Dendritic cell treated with granulocyte-macrophage colony-stimulating factor and Interleukin-4, amounts not matched to agents 40 ng/mL and 50 ng/mL, for 4 days (primary cell): ENCODE measurements at regions of chr10 and their contacts with region 1.

Region 1: DNA sequence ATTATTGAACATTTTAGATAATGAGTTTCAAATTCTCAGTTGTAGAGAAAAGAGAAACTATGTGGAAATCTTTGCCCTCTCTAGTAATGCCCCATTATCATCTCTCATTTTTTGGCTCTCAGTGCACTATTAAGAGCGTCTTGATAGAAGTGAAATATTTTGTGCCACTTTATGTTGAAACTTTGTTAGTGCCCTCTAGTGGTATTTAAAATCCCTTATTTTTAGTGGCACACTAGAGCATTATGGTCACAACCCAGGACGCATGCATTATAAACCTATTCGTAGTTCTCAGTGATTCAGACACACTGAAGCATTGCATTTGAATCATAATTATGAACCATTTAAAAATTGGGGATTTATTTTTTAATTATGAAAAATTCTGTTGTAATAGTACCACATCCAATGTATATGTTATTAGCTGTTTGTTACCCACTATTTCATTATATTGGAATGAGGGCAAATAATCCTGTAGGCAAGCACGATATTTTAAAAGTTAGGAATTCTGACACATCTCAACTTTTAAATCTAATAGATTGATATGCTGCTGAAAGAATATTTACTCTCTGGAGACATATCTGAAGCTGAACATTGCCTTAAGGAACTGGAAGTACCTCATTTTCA is 21.9 kb downstream of the PDCD4 start:
- H3K4me3 Mint-ChIP-seq: no peak overlapping the region
- H3K27ac Mint-ChIP-seq: no peak overlapping the region
- H3K4me1 Mint-ChIP-seq: peaks cover 5% of the 10 kb centered on the region
- H3K27me3 Mint-ChIP-seq: no peaks in the 10 kb centered on the region

Region 2: GRCh38 chr10:110600487-110601101 is 293.1 kb before region 1 on chr10:
- intact Hi-C with region 1: loop called (anchors 10 kb)
- H3K4me3 Mint-ChIP-seq: no peak overlapping the region
- H3K27ac Mint-ChIP-seq: no peak overlapping the region
- H3K4me1 Mint-ChIP-seq: no peaks in the 10 kb centered on the region
- H3K27me3 Mint-ChIP-seq: no peaks in the 10 kb centered on the region

Region 3: GRCh38 chr10:110746254-110746826 is 147.3 kb before region 1 on chr10:
- intact Hi-C with region 1: loop called (anchors 1 kb)
- H3K4me3 Mint-ChIP-seq: no peak overlapping the region
- H3K27ac Mint-ChIP-seq: no peak overlapping the region
- H3K4me1 Mint-ChIP-seq: peaks cover 9% of the 10 kb centered on the region
- H3K27me3 Mint-ChIP-seq: no peaks in the 10 kb centered on the region

Region 4: GRCh38 chr10:110803830-110804338 is 89.8 kb before region 1 on chr10:
- intact Hi-C with region 1: loop called (anchors 2 kb)
- H3K4me3 Mint-ChIP-seq: no peak overlapping the region
- H3K27ac Mint-ChIP-seq: no peak overlapping the region
- H3K4me1 Mint-ChIP-seq: peaks cover 10% of the 10 kb centered on the region
- H3K27me3 Mint-ChIP-seq: no peaks in the 10 kb centered on the region

Region 5: GRCh38 chr10:111207500-111207899 is 313.8 kb after region 1 on chr10:
- intact Hi-C with region 1: loop called (anchors 5 kb)
- H3K4me3 Mint-ChIP-seq: no peak overlapping the region
- H3K27ac Mint-ChIP-seq: no peak overlapping the region
- H3K4me1 Mint-ChIP-seq: no peaks in the 10 kb centered on the region
- H3K27me3 Mint-ChIP-seq: peaks cover 5% of the 10 kb centered on the region